ENCODE measurements at regions of chr6 and their contacts with region 1.

Region 1: DNA sequence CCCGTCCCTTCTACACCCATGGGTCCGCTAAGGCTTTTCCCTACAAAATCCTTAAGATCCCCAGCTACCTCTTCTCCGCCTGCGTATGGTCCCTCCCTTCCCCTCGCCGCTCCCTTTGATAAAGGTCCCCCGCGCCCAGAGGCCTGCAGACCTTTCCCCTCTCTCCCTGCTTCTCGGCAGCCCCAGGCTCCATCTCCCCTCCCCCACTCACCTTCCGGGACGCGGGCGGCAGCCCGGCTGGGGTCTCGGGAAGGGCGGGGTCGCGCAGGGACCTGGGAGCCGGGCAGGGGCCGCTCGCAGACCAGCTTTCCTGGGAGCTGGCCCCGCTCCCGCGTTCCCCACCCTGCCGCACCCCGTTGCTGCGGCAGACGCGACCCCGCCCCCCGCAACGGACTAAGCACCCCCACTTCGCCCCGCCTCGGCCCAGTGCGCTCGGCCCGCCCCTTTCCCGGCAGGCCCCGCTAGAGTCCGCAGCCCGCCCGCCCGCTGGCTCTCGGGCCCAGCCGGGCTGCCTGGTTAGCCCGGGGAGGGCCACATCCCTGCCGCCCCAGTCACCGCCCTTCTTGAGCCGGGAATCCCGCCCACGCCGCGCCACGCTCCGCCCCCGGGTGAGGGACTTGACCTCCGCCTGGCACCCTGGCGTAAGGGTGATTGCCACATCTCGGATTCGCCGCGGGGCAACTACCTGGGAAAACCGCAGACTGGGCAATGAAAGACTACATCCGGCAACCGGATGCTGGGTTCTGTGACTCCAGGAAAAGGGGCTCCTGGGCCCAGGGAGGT is at the start of gene FLOT1:
- DNase-seq: peak; percentile 66 to 93 (median 80)
- ATAC-seq: peak; percentile 60
- H3K4me3 ChIP-seq: peak within 1 kb of the TSS; percentile 75 to 84
- H3K4me3 Mint-ChIP-seq: peak within 1 kb of the TSS; percentile 91
- H3K27ac ChIP-seq: peak within 1 kb of the TSS; percentile 49 to 68
- H3K27ac Mint-ChIP-seq: peak within 1 kb of the TSS; percentile 85
- H3K4me1 ChIP-seq: peaks cover 45% of the 10 kb centered on the region
- H3K4me1 Mint-ChIP-seq: peaks cover 60% of the 10 kb centered on the region
- H3K27me3 ChIP-seq: no peaks in the 10 kb centered on the region
- H3K27me3 Mint-ChIP-seq: no peaks in the 10 kb centered on the region
- CTCF ChIP-seq: no peak
- total RNA-seq, gene FLOT1: 27.5 to 27.8 TPM

Region 2: GRCh38 chr6:30722280-30723112 is 20.0 kb before region 1 on chr6:
- CTCF ChIA-PET with region 1: interaction called, 121 read pairs
- POLR2A ChIA-PET with region 1: interaction called, 7 read pairs
- intact Hi-C with region 1: no loop called
- DNase-seq: peak; percentile 77 to 93 (median 87)
- ATAC-seq: no peak
- H3K4me3 ChIP-seq: peak overlapping the region; percentile 69 to 81
- H3K4me3 Mint-ChIP-seq: peak overlapping the region; percentile 90
- H3K27ac ChIP-seq: peak overlapping the region in 1 of 2 experiments; percentile 79
- H3K27ac Mint-ChIP-seq: peak overlapping the region; percentile 89
- H3K4me1 ChIP-seq: peaks cover 40% of the 10 kb centered on the region
- H3K4me1 Mint-ChIP-seq: peaks cover 63% of the 10 kb centered on the region
- H3K27me3 ChIP-seq: no peaks in the 10 kb centered on the region
- H3K27me3 Mint-ChIP-seq: no peaks in the 10 kb centered on the region
- CTCF ChIP-seq: peak; percentile 91

Region 3: GRCh38 chr6:30769088-30769852 is 26.8 kb after region 1 on chr6:
- CTCF ChIA-PET with region 1: interaction called, 5 read pairs
- POLR2A ChIA-PET with region 1: interaction called, 4 read pairs
- intact Hi-C with region 1: loop called in 1 of 2 experiments (anchors 2 kb)
- DNase-seq: peak in 8 of 9 experiments; percentile 46 to 75 (median 63)
- ATAC-seq: peak; percentile 88
- H3K4me3 ChIP-seq: peak overlapping the region in 1 of 2 experiments; percentile 28
- H3K4me3 Mint-ChIP-seq: peak overlapping the region; percentile 68
- H3K27ac ChIP-seq: peak overlapping the region in 1 of 2 experiments; percentile 56
- H3K27ac Mint-ChIP-seq: peak overlapping the region; percentile 89
- H3K4me1 ChIP-seq: peaks cover 39% of the 10 kb centered on the region
- H3K4me1 Mint-ChIP-seq: peaks cover 61% of the 10 kb centered on the region
- H3K27me3 ChIP-seq: no peaks in the 10 kb centered on the region
- H3K27me3 Mint-ChIP-seq: no peaks in the 10 kb centered on the region
- CTCF ChIP-seq: no peak

Region 4: DNA sequence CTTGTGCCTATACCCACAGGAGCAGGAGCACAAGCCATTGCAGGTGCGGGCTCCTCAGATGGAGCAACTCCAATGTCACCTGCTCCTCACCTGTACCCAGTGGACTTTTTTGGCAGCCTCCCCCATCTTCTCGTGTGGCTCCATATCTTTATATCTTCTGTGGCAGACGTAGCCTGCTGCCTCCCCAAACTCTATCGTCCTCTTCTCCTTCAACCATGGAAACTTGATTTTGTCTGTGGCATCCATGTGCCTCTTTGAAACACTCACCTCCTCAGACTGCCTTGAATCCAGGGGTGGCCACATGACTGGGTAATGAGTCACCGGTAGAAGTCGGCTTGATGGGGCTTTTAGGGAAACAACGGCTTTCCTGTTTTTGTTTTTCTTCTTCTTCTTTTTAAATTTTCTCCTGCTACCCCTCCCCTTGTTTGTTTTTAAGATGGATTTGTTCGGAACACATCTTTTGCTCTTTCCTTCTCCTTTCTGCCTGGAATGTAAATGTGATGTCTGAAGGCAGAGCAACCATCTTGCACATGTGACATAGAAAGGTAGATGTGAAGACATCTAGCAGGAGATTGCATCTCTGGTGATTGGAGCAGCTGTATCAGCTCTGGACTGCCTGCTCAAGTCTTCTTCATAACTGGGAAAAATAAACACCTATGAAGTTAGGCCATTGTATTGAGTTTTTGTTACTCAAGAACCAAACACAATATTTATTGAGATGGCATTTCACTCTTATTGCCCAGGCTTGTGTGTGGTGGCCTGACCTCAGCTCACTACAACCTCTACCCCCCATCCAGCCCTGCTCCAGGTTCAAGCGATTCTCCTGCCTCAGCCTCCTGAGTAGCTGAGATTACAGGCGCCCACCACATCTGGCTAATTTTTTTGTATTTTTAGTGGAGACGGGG is 71.9 kb after region 1 on chr6:
- CTCF ChIA-PET with region 1: no interaction called
- POLR2A ChIA-PET with region 1: interaction called, 3 read pairs
- intact Hi-C with region 1: loop called in 1 of 2 experiments (anchors 5 kb)
- DNase-seq: peak in 5 of 9 experiments; percentile 41 to 68 (median 59)
- ATAC-seq: peak; percentile 82
- H3K4me3 ChIP-seq: no peak overlapping the region
- H3K4me3 Mint-ChIP-seq: no peak overlapping the region
- H3K27ac ChIP-seq: no peak overlapping the region
- H3K27ac Mint-ChIP-seq: peak overlapping the region; percentile 75
- H3K4me1 ChIP-seq: peaks cover 34% of the 10 kb centered on the region
- H3K4me1 Mint-ChIP-seq: peaks cover 66% of the 10 kb centered on the region
- H3K27me3 ChIP-seq: no peaks in the 10 kb centered on the region
- H3K27me3 Mint-ChIP-seq: no peaks in the 10 kb centered on the region
- CTCF ChIP-seq: no peak

Region 5: GRCh38 chr6:30877419-30878371 is 135.2 kb after region 1 on chr6:
- CTCF ChIA-PET with region 1: interaction called, 4 read pairs
- POLR2A ChIA-PET with region 1: interaction called, 3 read pairs
- intact Hi-C with region 1: loop called (anchors 1 kb)
- DNase-seq: peak; percentile 48 to 87 (median 74)
- ATAC-seq: peak; percentile 90
- H3K4me3 ChIP-seq: peak overlapping the region; percentile 38 to 46
- H3K4me3 Mint-ChIP-seq: peak overlapping the region; percentile 85
- H3K27ac ChIP-seq: peak overlapping the region in 1 of 2 experiments; percentile 49
- H3K27ac Mint-ChIP-seq: peak overlapping the region; percentile 87
- H3K4me1 ChIP-seq: peaks cover 15% of the 10 kb centered on the region
- H3K4me1 Mint-ChIP-seq: peaks cover 19% of the 10 kb centered on the region
- H3K27me3 ChIP-seq: no peaks in the 10 kb centered on the region
- H3K27me3 Mint-ChIP-seq: no peaks in the 10 kb centered on the region
- CTCF ChIP-seq: peak; percentile 70